Caco-2 (cell line): ENCODE measurements at regions of chr11 and their contacts with region 1.

Region 1: DNA sequence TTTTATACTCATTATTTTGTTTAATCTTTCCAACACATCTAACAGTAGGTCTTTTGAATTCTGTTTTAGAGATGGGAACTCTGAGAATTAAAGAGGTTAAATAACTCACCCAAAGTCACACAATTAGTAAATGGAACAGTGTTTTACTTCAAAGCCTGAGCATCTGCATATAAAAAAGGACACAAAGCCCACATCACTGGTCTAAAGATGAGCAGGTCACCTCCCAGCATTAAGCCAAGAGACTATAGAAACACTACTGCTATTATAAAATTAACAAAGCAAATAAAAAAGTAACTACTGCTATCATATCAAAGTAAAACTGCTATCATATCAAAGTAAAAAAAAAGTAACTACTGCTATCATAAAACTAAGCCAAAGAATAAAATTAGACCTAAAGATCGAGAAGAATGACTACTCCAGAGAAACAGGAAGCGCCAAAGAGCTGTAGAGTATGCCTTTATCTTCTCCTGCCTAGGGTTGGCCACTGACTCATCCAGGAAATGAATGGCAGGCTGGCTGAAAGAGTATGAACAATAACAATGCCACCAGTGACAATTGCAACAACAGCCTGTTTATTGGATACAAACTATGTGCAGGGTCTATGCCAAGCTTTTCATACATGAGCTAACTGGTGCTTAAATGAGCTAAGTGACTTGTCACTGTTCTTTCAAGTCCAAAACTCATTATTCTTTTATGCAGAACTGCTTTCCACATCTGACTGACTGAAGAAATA is 1153.0 kb upstream of the TENM4 start:
- DNase-seq: peak; percentile 19 to 43
- H3K4me3 ChIP-seq: no peak overlapping the region
- H3K4me3 Mint-ChIP-seq: no peak overlapping the region
- H3K27ac Mint-ChIP-seq: no peak overlapping the region
- H3K4me1 ChIP-seq: peaks cover 46% of the 10 kb centered on the region
- H3K4me1 Mint-ChIP-seq: peaks cover 44% of the 10 kb centered on the region
- H3K27me3 ChIP-seq: no peaks in the 10 kb centered on the region
- H3K27me3 Mint-ChIP-seq: no peaks in the 10 kb centered on the region
- CTCF ChIP-seq: no peak

Region 2: DNA sequence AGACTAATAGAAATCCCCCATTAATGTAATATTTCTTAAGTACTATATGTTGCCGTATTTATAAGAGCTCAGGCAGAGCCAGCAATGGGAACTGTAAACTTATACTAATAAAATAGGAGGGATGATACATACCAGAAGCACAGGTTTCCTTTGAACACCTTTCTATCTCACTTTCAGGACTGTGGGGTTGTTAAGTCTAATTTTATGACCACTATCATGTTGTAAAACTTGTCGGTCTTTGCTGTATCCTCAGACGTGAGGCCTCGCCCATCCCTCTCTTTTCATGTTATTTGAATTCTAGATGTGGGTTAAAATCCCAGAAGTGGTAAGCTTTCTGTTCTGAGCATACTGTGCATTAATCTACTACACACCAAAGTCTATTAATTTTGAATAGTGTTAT is 69.5 kb before region 1 on chr11:
- CTCF ChIA-PET with region 1: no interaction called
- POLR2A ChIA-PET with region 1: no interaction called
- intact Hi-C with region 1: loop called (anchors 1 kb)
- DNase-seq: peak in 1 of 2 experiments; percentile 18
- H3K4me3 ChIP-seq: no peak overlapping the region
- H3K4me3 Mint-ChIP-seq: no peak overlapping the region
- H3K27ac Mint-ChIP-seq: no peak overlapping the region
- H3K4me1 ChIP-seq: peaks cover 11% of the 10 kb centered on the region
- H3K4me1 Mint-ChIP-seq: peaks cover 5% of the 10 kb centered on the region
- H3K27me3 ChIP-seq: no peaks in the 10 kb centered on the region
- H3K27me3 Mint-ChIP-seq: no peaks in the 10 kb centered on the region
- CTCF ChIP-seq: no peak

Region 3: GRCh38 chr11:80565231-80565630 is 28.6 kb before region 1 on chr11:
- CTCF ChIA-PET with region 1: no interaction called
- POLR2A ChIA-PET with region 1: no interaction called
- intact Hi-C with region 1: no loop called
- DNase-seq: no peak
- H3K4me3 ChIP-seq: no peak overlapping the region
- H3K4me3 Mint-ChIP-seq: no peak overlapping the region
- H3K27ac Mint-ChIP-seq: no peak overlapping the region
- H3K4me1 ChIP-seq: 0 out of 2 replicates have a peak, but pooled peaks cover 8% of the 10 kb centered on the region
- H3K4me1 Mint-ChIP-seq: no peaks in the 10 kb centered on the region
- H3K27me3 ChIP-seq: no peaks in the 10 kb centered on the region
- H3K27me3 Mint-ChIP-seq: no peaks in the 10 kb centered on the region
- CTCF ChIP-seq: no peak

Region 4: GRCh38 chr11:80613655-80614054 is 19.8 kb after region 1 on chr11:
- CTCF ChIA-PET with region 1: no interaction called
- POLR2A ChIA-PET with region 1: no interaction called
- intact Hi-C with region 1: no loop called
- DNase-seq: no peak
- H3K4me3 ChIP-seq: no peak overlapping the region
- H3K4me3 Mint-ChIP-seq: no peak overlapping the region
- H3K27ac Mint-ChIP-seq: no peak overlapping the region
- H3K4me1 ChIP-seq: peaks cover 9% of the 10 kb centered on the region
- H3K4me1 Mint-ChIP-seq: peaks cover 7% of the 10 kb centered on the region
- H3K27me3 ChIP-seq: no peaks in the 10 kb centered on the region
- H3K27me3 Mint-ChIP-seq: no peaks in the 10 kb centered on the region
- CTCF ChIP-seq: no peak

Region 5: DNA sequence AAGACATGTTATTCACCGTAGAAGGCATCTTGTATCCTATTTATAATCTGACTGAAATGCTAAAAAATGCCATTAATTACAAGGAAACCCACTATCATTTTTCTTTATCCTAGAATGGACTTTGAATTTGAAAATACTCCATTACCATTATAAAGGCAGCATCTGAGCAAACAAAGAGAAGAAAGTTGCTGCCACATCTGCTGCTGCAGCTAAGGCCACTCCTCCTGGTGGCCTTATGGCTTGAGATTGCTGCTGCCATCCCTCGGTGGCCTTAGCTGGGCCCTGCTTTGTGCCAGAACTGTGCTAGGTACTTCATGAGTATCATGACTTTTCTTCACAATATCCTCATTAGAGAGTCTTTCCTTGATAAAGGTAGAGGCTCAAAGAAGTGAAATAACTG is 57.2 kb after region 1 on chr11:
- CTCF ChIA-PET with region 1: no interaction called
- POLR2A ChIA-PET with region 1: no interaction called
- intact Hi-C with region 1: loop called (anchors 2 kb)
- DNase-seq: no peak
- H3K4me3 ChIP-seq: no peak overlapping the region
- H3K4me3 Mint-ChIP-seq: no peak overlapping the region
- H3K27ac Mint-ChIP-seq: no peak overlapping the region
- H3K4me1 ChIP-seq: peaks cover 28% of the 10 kb centered on the region
- H3K4me1 Mint-ChIP-seq: peaks cover 14% of the 10 kb centered on the region
- H3K27me3 ChIP-seq: no peaks in the 10 kb centered on the region
- H3K27me3 Mint-ChIP-seq: no peaks in the 10 kb centered on the region
- CTCF ChIP-seq: no peak

Region 6: DNA sequence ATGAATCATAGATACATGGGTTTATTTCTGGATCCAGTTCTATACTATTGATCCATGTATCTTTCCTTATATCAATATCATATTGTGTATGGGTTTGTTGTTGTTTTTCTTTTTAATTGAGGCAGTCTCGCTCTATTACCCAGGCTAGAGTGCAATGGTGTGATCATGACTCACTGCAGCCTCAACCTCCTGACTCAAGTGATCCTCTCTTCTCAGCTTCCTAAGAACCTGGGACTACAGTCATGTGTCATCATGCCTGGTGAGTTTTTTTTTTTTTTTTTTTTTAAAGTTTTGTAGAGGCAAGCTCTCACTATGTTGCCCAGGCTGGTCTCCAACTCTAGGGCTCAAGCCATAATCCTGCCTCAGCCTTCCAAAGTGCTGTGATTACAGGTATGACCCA is 436.4 kb after region 1 on chr11:
- CTCF ChIA-PET with region 1: no interaction called
- POLR2A ChIA-PET with region 1: no interaction called
- intact Hi-C with region 1: loop called (anchors 2 kb)
- DNase-seq: no peak
- H3K4me3 ChIP-seq: no peak overlapping the region
- H3K4me3 Mint-ChIP-seq: no peak overlapping the region
- H3K27ac Mint-ChIP-seq: no peak overlapping the region
- H3K4me1 ChIP-seq: peaks cover 10% of the 10 kb centered on the region
- H3K4me1 Mint-ChIP-seq: peaks cover 9% of the 10 kb centered on the region
- H3K27me3 ChIP-seq: no peaks in the 10 kb centered on the region
- H3K27me3 Mint-ChIP-seq: no peaks in the 10 kb centered on the region
- CTCF ChIP-seq: no peak

Region 7: GRCh38 chr11:81039916-81040524 is 446.2 kb after region 1 on chr11:
- CTCF ChIA-PET with region 1: no interaction called
- POLR2A ChIA-PET with region 1: no interaction called
- intact Hi-C with region 1: loop called (anchors 1 kb)
- DNase-seq: peak; percentile 64 to 70
- H3K4me3 ChIP-seq: no peak overlapping the region
- H3K4me3 Mint-ChIP-seq: peak overlapping the region; percentile 20
- H3K27ac Mint-ChIP-seq: peak overlapping the region; percentile 16
- H3K4me1 ChIP-seq: peaks cover 45% of the 10 kb centered on the region
- H3K4me1 Mint-ChIP-seq: peaks cover 47% of the 10 kb centered on the region
- H3K27me3 ChIP-seq: peaks cover 2% of the 10 kb centered on the region; the same call in 1 of the 2 replicates
- H3K27me3 Mint-ChIP-seq: no peaks in the 10 kb centered on the region
- CTCF ChIP-seq: no peak

Region 8: GRCh38 chr11:81192516-81192915 is 598.7 kb after region 1 on chr11:
- CTCF ChIA-PET with region 1: no interaction called
- POLR2A ChIA-PET with region 1: no interaction called
- intact Hi-C with region 1: loop called (anchors 1 kb)
- DNase-seq: peak in 1 of 2 experiments; percentile 38
- H3K4me3 ChIP-seq: no peak overlapping the region
- H3K4me3 Mint-ChIP-seq: no peak overlapping the region
- H3K27ac Mint-ChIP-seq: no peak overlapping the region
- H3K4me1 ChIP-seq: peaks cover 19% of the 10 kb centered on the region
- H3K4me1 Mint-ChIP-seq: peaks cover 13% of the 10 kb centered on the region
- H3K27me3 ChIP-seq: no peaks in the 10 kb centered on the region
- H3K27me3 Mint-ChIP-seq: no peaks in the 10 kb centered on the region
- CTCF ChIP-seq: no peak